ENCODE measurements at regions of chr10 and their contacts with region 1.

Region 1: GRCh38 chr10:102450194-102450938 is 977 bp downstream of the C10orf95 start:
- DNase-seq: peak; percentile 56
- ATAC-seq: peak; percentile 88
- H3K4me3 ChIP-seq: peak overlapping the region; percentile 99
- H3K27ac ChIP-seq: peak overlapping the region; percentile 88
- H3K4me1 ChIP-seq: peaks cover 18% of the 10 kb centered on the region
- H3K27me3 ChIP-seq: no peaks in the 10 kb centered on the region
- CTCF ChIP-seq: no peak
- EP300 ChIP-seq: no peak
- POLR2A ChIP-seq: peak; percentile 79
- RAD21 ChIP-seq: no peak

Region 2: DNA sequence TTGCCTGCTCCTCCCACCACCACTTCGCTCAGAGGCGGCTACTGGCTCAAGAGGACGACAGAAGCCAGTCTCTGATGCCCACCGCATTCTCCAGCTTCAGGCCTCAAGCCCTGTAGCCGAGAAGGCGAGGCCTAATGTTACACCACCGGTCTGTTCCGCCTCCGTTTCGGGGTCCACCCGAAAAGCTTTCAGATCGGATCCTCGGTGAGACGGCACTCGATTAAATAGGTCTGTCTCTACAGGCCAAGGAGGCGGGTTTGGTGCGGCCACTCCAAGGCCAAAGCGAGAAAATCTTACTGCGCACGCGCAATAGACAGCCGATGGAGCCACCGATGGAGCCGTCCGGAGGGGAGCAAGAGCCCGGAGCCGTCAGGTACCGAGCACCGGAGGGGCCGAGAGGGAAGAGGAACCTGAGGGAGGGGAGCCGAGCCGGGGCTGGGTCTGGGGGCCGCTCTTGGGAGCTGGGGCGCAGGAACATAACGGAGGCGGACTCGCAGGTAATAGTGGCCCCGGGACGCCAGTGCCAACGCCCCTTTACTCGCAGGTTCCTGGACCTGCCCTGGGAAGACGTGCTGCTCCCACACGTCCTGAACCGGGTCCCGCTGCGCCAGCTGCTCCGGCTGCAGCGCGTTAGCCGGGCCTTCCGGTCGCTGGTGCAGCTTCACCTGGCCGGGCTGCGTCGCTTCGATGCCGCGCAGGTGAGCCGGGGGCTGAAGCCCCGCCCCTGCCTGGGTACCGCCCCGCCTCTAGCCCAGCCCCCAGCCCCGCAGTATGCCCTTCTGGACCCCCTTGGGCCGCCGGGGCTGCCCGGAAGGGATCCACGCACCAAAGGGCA is 29.3 kb before region 1 on chr10 and contains the start of gene FBXL15:
- CTCF ChIA-PET with region 1: interaction called, 21 read pairs
- POLR2A ChIA-PET with region 1: interaction called, 12 read pairs
- RAD21 ChIA-PET with region 1: interaction called, 13 read pairs
- SMC1A ChIA-PET with region 1: interaction called, 4 read pairs
- in situ Hi-C with region 1: no loop called
- intact Hi-C with region 1: no loop called
- DNase-seq: peak; percentile 89
- ATAC-seq: peak; percentile 77
- H3K4me3 ChIP-seq: peak within 1 kb of the TSS; percentile 98
- H3K27ac ChIP-seq: peak within 1 kb of the TSS; percentile 85
- H3K4me1 ChIP-seq: peaks cover 18% of the 10 kb centered on the region
- H3K27me3 ChIP-seq: no peaks in the 10 kb centered on the region; a peak in 1 of 4 replicates
- CTCF ChIP-seq: no peak
- EP300 ChIP-seq: no peak
- POLR2A ChIP-seq: peak; percentile 79
- RAD21 ChIP-seq: no peak
- polyA plus RNA-seq, gene FBXL15: 0.13 to 0.66 TPM

Region 3: GRCh38 chr10:102438374-102438773 is 12.0 kb before region 1 on chr10:
- CTCF ChIA-PET with region 1: interaction called, 7 read pairs
- POLR2A ChIA-PET with region 1: interaction called, 38 read pairs
- RAD21 ChIA-PET with region 1: interaction called, 16 read pairs
- SMC1A ChIA-PET with region 1: interaction called, 7 read pairs
- in situ Hi-C with region 1: no loop called
- intact Hi-C with region 1: loop called (anchors 2 kb)
- DNase-seq: no peak
- ATAC-seq: no peak
- H3K4me3 ChIP-seq: no peak overlapping the region
- H3K27ac ChIP-seq: no peak overlapping the region
- H3K4me1 ChIP-seq: peaks cover 22% of the 10 kb centered on the region
- H3K27me3 ChIP-seq: no peaks in the 10 kb centered on the region
- CTCF ChIP-seq: no peak
- EP300 ChIP-seq: no peak
- POLR2A ChIP-seq: no peak
- RAD21 ChIP-seq: no peak

Region 4: DNA sequence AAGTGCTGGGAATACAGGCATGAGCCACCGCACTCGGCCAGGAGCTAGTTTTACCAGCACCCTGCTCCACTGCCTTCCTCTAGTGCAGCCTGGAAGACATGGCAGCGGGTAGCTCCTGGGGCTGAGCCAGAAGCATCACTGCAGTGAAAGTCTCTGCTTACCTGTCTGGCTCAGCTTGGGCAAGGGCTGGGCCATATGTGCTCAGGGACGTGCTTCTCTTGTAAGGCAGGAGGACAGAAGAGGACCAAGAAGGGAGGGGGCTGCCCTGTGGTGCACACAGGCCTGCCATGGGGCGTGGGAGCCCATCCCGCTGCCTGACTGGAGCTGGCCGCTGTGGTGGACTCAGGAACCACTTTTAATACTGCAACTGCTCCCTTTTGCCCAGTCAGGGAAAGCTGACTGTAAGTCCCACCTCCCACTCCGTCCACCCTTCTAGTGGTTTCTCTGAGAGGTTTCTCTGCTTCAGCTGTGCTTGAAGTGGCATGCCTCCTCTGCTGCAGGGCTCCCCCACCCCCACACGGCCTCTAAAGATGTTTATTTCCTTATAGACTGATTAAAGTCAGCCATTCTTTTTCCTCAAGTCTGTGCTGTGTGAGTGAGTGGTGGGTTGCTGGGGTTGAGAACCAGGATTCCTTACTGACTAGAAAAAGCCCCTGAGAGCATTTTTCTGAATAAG is 26.2 kb after region 1 on chr10:
- CTCF ChIA-PET with region 1: interaction called, 10 read pairs
- POLR2A ChIA-PET with region 1: interaction called, 4 read pairs
- RAD21 ChIA-PET with region 1: interaction called, 4 read pairs
- SMC1A ChIA-PET with region 1: interaction called, 10 read pairs
- in situ Hi-C with region 1: no loop called
- intact Hi-C with region 1: no loop called
- DNase-seq: no peak
- ATAC-seq: no peak
- H3K4me3 ChIP-seq: no peak overlapping the region
- H3K27ac ChIP-seq: no peak overlapping the region
- H3K4me1 ChIP-seq: no peaks in the 10 kb centered on the region
- H3K27me3 ChIP-seq: no peaks in the 10 kb centered on the region
- CTCF ChIP-seq: no peak
- EP300 ChIP-seq: no peak
- POLR2A ChIP-seq: no peak
- RAD21 ChIP-seq: no peak

Region 5: GRCh38 chr10:102534333-102534732 is 84.0 kb after region 1 on chr10:
- CTCF ChIA-PET with region 1: no interaction called
- POLR2A ChIA-PET with region 1: no interaction called
- RAD21 ChIA-PET with region 1: no interaction called
- SMC1A ChIA-PET with region 1: no interaction called
- in situ Hi-C with region 1: no loop called
- intact Hi-C with region 1: no loop called
- DNase-seq: no peak
- ATAC-seq: no peak
- H3K4me3 ChIP-seq: no peak overlapping the region
- H3K27ac ChIP-seq: no peak overlapping the region
- H3K4me1 ChIP-seq: peaks cover 20% of the 10 kb centered on the region
- H3K27me3 ChIP-seq: no peaks in the 10 kb centered on the region
- CTCF ChIP-seq: no peak
- EP300 ChIP-seq: no peak
- POLR2A ChIP-seq: no peak
- RAD21 ChIP-seq: no peak

Region 6: DNA sequence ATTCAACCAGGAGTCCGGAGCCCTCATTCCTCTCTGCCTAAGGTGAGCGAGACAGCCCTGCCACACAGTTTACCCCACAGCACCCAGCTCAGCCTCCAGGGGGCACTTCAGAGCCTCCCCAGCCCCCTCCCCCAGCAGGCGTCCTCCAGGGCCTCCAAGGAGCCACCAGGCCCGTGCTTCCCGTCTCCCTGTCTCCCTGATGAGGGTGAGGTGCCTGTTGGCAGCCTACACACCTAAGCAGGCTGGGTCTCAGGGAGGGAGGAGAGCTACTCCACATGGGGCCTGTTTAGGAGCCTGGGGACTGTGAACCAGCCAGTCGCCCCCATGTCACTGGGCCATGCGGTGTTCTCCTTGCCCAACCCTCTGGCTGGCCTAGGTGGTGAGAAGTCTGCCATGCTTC is 165.0 kb after region 1 on chr10:
- CTCF ChIA-PET with region 1: no interaction called
- POLR2A ChIA-PET with region 1: no interaction called
- RAD21 ChIA-PET with region 1: no interaction called
- SMC1A ChIA-PET with region 1: no interaction called
- in situ Hi-C with region 1: no loop called
- intact Hi-C with region 1: no loop called
- DNase-seq: no peak
- ATAC-seq: peak; percentile 76
- H3K4me3 ChIP-seq: no peak overlapping the region
- H3K27ac ChIP-seq: no peak overlapping the region
- H3K4me1 ChIP-seq: 0 out of 2 replicates have a peak, but pooled peaks cover 3% of the 10 kb centered on the region
- H3K27me3 ChIP-seq: no peaks in the 10 kb centered on the region
- CTCF ChIP-seq: peak; percentile 17 to 35 (median 23); a peak in 3 of 6 replicates
- EP300 ChIP-seq: no peak
- POLR2A ChIP-seq: no peak
- RAD21 ChIP-seq: 0 out of 2 replicates have a peak, but pooled peaks have one; percentile 2

Measured in GM12878 (cell line).